Dendritic cell treated with granulocyte-macrophage colony-stimulating factor and Interleukin-4, amounts not matched to agents 40 ng/mL and 50 ng/mL, for 4 days (primary cell): ENCODE measurements at regions of chr1 and their contacts with region 1.

Region 1: GRCh38 chr1:39845275-39846116 is 37.8 kb downstream of the TRIT1 start:
- H3K4me3 Mint-ChIP-seq: no peak overlapping the region
- H3K27ac Mint-ChIP-seq: peak overlapping the region; percentile 92
- H3K4me1 Mint-ChIP-seq: peaks cover 51% of the 10 kb centered on the region
- H3K27me3 Mint-ChIP-seq: no peaks in the 10 kb centered on the region

Region 2: GRCh38 chr1:39892601-39893595 is 47.4 kb after region 1 on chr1:
- intact Hi-C with region 1: loop called (anchors 5 kb)
- H3K4me3 Mint-ChIP-seq: peak overlapping the region; percentile 61
- H3K27ac Mint-ChIP-seq: peak overlapping the region; percentile 84
- H3K4me1 Mint-ChIP-seq: peaks cover 81% of the 10 kb centered on the region
- H3K27me3 Mint-ChIP-seq: no peaks in the 10 kb centered on the region